ENCODE measurements at regions of chr12 and their contacts with region 1.

Region 1: DNA sequence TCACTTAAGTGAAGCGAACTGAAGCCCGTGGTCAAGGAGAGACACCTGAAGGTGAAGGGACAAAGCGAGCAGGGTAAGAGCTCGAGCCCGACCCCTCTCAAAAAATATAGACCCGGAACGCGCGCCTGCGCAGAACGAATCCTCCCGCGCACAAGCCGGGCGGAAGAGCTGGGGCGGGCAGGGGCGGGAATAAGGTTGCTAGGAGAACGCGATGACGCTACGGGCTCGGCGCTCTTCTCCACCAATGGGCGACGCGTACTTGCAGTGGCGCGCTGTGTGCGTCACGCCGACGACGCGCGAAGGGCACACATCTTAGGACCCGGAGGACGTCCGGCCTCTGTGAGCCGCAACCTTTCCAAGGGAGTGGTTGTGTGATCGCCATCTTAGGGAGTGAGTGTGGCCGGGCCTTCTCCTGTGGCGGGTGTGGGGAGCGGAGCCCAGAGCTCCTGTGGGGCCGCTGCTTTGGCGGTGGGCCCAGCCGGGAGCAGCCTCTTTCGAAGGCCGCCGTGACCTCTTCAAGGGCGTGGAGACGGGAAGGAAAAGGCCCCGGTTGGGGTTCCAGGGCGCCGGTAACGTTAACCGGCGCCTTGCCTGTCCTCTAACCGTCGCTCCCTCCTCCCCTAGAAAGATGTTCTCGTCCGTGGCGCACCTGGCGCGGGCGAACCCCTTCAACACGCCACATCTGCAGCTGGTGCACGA is at the start of gene SLC25A3:
- DNase-seq: peak; percentile 92
- H3K4me3 Mint-ChIP-seq: peak within 1 kb of the TSS; percentile 96
- H3K27ac Mint-ChIP-seq: peak within 1 kb of the TSS; percentile 99
- H3K4me1 Mint-ChIP-seq: peaks cover 29% of the 10 kb centered on the region
- H3K27me3 Mint-ChIP-seq: no peaks in the 10 kb centered on the region
- total RNA-seq, gene SLC25A3: 570 and 580 TPM in 2 replicates

Region 2: DNA sequence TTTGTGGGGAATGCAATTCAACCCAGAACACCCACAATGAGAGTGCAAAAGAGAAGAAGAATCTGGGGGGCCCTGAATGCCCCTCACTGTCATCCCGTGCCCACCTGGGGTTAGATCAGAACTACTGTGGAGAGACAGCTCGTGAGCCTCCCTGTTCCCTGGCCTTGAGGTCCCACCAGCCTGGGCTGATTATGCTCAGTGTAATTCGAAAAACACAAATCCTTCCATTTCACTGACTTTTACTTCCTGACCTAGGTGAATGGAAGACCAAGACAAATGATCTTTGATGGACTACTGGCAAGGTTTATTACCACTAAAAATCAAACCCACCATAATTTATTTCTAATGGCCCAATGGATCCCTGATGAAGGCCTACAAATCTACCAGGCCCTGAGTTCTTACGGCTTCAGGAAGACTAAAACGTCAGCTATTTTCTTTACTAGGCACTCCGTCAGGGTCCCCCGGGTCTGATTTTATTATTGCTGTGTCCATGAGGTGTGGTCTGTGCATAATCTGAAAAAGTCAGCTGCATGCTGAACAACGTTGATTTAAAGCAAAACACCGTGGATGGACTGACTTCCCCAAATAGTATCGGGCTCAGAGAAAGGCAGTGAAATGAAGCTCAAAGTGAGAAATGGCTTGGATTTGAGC is 1175.8 kb before region 1 on chr12:
- intact Hi-C with region 1: no loop called
- DNase-seq: no peak
- H3K4me3 Mint-ChIP-seq: no peak overlapping the region
- H3K27ac Mint-ChIP-seq: no peak overlapping the region
- H3K4me1 Mint-ChIP-seq: no peaks in the 10 kb centered on the region
- H3K27me3 Mint-ChIP-seq: no peaks in the 10 kb centered on the region

Region 3: DNA sequence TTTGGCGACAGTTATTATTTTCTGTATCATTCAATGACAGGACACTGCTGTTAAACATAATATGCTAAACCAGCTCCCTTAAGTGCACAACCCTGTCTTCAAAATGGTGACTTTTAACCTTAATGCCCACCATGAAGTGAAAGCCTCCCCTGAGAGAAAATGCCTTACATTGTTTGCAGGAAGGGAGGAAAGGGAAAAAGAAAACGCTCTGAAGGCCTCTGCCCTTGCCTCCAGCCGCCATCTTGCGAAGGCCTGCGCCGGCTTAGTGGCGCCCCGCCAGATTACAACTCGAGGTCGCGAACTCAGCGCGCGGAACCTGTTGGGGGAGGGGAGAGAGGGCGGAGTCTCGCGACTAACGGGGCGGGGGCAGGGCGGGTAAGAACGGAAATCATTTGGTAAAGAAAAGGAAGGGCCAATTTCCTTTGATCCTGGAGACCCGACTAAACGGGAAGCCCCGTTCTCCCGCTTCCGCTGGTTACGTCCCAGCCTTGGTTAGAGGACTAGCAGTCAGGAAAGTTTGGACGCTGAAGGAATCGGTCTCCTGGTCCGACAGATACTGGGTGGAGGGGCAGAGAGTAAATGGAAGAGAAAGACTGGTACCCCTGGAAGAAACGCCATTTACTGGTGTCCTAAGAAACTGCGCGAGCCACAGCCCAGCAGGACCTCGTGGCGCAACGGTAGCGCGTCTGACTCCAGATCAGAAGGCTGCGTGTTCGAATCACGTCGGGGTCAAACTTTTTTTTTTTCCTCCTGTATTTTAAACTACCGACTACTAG is 89.7 kb before region 1 on chr12:
- intact Hi-C with region 1: loop called (anchors 1 kb)
- DNase-seq: peak; percentile 90
- H3K4me3 Mint-ChIP-seq: peak overlapping the region; percentile 91
- H3K27ac Mint-ChIP-seq: peak overlapping the region; percentile 99
- H3K4me1 Mint-ChIP-seq: peaks cover 27% of the 10 kb centered on the region
- H3K27me3 Mint-ChIP-seq: peaks cover 8% of the 10 kb centered on the region

Region 4: GRCh38 chr12:98532681-98533304 is 60.7 kb before region 1 on chr12:
- intact Hi-C with region 1: no loop called
- DNase-seq: no peak
- H3K4me3 Mint-ChIP-seq: no peak overlapping the region
- H3K27ac Mint-ChIP-seq: no peak overlapping the region
- H3K4me1 Mint-ChIP-seq: peaks cover 18% of the 10 kb centered on the region
- H3K27me3 Mint-ChIP-seq: no peaks in the 10 kb centered on the region

Region 5: GRCh38 chr12:98544751-98545150 is 48.7 kb before region 1 on chr12:
- intact Hi-C with region 1: loop called (anchors 5 kb)
- DNase-seq: no peak
- H3K4me3 Mint-ChIP-seq: no peak overlapping the region
- H3K27ac Mint-ChIP-seq: no peak overlapping the region
- H3K4me1 Mint-ChIP-seq: peaks cover 12% of the 10 kb centered on the region
- H3K27me3 Mint-ChIP-seq: no peaks in the 10 kb centered on the region

Region 6: GRCh38 chr12:98572010-98572409 is 21.5 kb before region 1 on chr12:
- intact Hi-C with region 1: loop called (anchors 1 kb)
- DNase-seq: no peak
- H3K4me3 Mint-ChIP-seq: no peak overlapping the region
- H3K27ac Mint-ChIP-seq: no peak overlapping the region
- H3K4me1 Mint-ChIP-seq: peaks cover 1% of the 10 kb centered on the region
- H3K27me3 Mint-ChIP-seq: peaks cover 2% of the 10 kb centered on the region

Region 7: DNA sequence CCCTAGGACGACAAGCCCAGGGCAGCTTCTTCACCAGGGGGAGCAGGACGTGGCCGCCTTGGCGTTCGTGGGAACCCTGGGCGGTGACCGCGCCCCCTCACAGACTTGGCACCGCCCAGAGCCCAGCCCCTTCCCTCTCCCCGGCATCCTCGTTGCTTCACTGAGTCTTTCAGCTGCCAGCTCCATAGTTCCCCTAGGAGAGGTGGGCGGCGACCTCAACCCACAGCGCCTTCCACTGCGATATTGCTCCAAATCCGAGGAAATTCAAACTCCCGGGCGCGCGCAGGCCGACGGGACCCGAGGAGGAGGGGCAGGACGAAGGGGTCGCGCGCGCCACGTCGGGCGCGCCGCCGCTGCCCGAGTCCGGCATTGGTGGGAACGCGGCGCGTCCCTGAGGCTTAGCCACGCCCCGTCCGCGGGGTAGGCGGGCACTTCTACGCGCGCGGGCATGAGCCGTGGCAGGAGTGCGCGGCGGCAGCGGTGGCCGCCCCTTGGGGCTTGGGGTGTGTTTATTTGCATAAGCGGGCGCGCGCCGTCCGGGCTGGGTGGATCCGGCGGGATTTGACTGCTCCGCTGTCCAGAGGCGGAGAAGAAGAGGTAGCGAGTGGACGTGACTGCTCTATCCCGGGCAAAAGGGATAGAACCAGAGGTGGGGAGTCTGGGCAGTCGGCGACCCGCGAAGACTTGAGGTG is 51.4 kb after region 1 on chr12 and contains the starts of genes APAF1 and IKBIP:
- intact Hi-C with region 1: loop called (anchors 1 kb)
- DNase-seq: peak; percentile 96
- H3K4me3 Mint-ChIP-seq: peak within 1 kb of the TSS; percentile 92
- H3K27ac Mint-ChIP-seq: peak within 1 kb of the TSS; percentile 95
- H3K4me1 Mint-ChIP-seq: peaks cover 49% of the 10 kb centered on the region
- H3K27me3 Mint-ChIP-seq: no peaks in the 10 kb centered on the region
- total RNA-seq, gene APAF1: 21.2 and 23.9 TPM in 2 replicates
- total RNA-seq, gene IKBIP: 35.5 and 36.5 TPM in 2 replicates

Measured in activated T-helper 1 cell treated with anti-CD3 and anti-CD28 coated beads, Interleukin-12 subunit alpha, Interleukin-12 subunit beta, Interleukin-2, Interleukin-4 antibody, amounts not matched to agents 30 ng/mL and 10 ng/mL and 1 ng/mL, durations not matched to agents 14 hours and 24 hours and 36 hours (primary cell).